ENCODE measurements at regions of chrX and their contacts with region 1.

Region 1: GRCh38 chrX:96684339-96685209 is at the start of gene DIAPH2:
- DNase-seq: peak; percentile 76
- H3K4me3 ChIP-seq: peak within 1 kb of the TSS; percentile 75 to 92 (median 76)
- H3K27ac ChIP-seq: peak within 1 kb of the TSS; percentile 68
- H3K4me1 ChIP-seq: peaks cover 11% of the 10 kb centered on the region
- H3K27me3 ChIP-seq: no peaks in the 10 kb centered on the region
- CTCF ChIP-seq: no peak
- POLR2A ChIP-seq: no peak
- total RNA-seq, gene DIAPH2: 30.0 and 30.3 TPM in 2 replicates

Region 2: DNA sequence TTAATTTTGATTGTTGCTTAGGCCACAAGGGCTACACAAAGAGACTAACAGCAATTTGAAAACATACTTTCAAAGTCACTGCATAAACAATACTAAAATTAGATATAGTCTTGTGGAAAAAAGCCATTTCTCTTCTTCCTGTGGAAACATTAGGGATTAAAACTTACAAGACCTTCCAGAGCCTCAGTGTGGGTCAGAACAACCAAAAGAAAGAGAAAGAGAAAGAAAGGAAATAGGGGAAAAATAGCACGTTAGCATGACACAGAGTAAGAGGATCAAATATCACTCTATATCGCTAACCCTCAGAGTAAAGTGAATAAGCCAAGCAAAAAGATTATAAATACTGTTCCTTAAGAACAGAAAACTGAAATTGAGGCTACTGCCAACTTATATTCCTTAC is 127.7 kb before region 1 on chrX:
- CTCF ChIA-PET with region 1: no interaction called
- POLR2A ChIA-PET with region 1: no interaction called
- dilution Hi-C with region 1: no loop called
- intact Hi-C with region 1: loop called (anchors 10 kb)
- DNase-seq: peak; percentile 1
- H3K4me3 ChIP-seq: no peak overlapping the region
- H3K27ac ChIP-seq: no peak overlapping the region
- H3K4me1 ChIP-seq: no peaks in the 10 kb centered on the region
- H3K27me3 ChIP-seq: no peaks in the 10 kb centered on the region
- CTCF ChIP-seq: no peak
- POLR2A ChIP-seq: no peak

Region 3: GRCh38 chrX:96704629-96705028 is 20.1 kb after region 1 on chrX:
- CTCF ChIA-PET with region 1: interaction called, 4 read pairs
- POLR2A ChIA-PET with region 1: no interaction called
- dilution Hi-C with region 1: no loop called
- intact Hi-C with region 1: loop called (anchors 1 kb)
- DNase-seq: peak; percentile 68
- H3K4me3 ChIP-seq: no peak overlapping the region
- H3K27ac ChIP-seq: peak overlapping the region; percentile 90
- H3K4me1 ChIP-seq: peaks cover 26% of the 10 kb centered on the region
- H3K27me3 ChIP-seq: no peaks in the 10 kb centered on the region
- CTCF ChIP-seq: no peak
- POLR2A ChIP-seq: no peak